ENCODE measurements at regions of chr1 and their contacts with region 1.

Region 1: DNA sequence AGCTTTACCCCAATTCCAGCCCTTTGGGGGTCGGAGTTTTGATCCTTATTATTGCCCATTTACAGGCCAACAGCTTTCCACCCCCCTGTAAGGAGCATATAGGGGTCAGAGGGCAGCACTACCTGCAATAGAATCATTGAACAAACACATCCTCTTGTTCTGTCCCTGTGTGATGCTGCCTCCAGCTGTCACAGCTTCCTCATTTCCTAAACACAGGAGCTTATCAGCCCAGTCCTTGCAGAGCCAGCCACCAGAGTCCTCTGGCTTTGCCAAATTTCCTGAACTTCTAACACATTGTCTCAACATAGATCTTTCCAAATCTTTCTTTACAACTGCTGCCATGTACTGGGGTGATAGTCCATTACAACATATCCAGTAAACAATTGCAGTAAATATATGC is 32.8 kb upstream of the PTBP2 start:
- DNase-seq: no peak
- ATAC-seq: no peak
- H3K4me3 ChIP-seq: no peak overlapping the region
- H3K27ac ChIP-seq: no peak overlapping the region
- H3K4me1 ChIP-seq: no peaks in the 10 kb centered on the region
- H3K27me3 ChIP-seq: no peaks in the 10 kb centered on the region
- CTCF ChIP-seq: no peak

Region 2: DNA sequence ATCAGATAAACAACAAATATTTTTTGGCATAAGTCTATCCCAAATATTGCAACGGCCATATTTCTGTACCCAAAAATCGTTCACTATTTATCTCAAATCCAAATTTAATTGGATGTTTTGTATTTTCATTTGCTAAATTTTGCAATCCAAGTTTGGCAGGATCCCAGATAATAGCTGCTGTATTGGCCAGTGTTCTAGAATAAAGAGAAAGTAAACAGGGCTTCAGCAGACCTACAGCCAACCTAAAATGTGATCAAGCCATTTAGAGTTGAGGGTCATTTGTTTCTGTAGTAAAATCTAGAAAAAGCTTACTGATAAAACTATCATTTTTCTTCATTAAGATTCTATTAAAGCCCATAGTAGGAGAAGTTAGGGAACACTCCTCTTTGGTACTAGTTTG is 473.8 kb before region 1 on chr1:
- CTCF ChIA-PET with region 1: no interaction called
- POLR2A ChIA-PET with region 1: interaction called, 10 read pairs
- intact Hi-C with region 1: no loop called
- DNase-seq: no peak
- ATAC-seq: no peak
- H3K4me3 ChIP-seq: no peak overlapping the region
- H3K27ac ChIP-seq: no peak overlapping the region
- H3K4me1 ChIP-seq: no peaks in the 10 kb centered on the region
- H3K27me3 ChIP-seq: peaks cover 61% of the 10 kb centered on the region
- CTCF ChIP-seq: no peak

Region 3: DNA sequence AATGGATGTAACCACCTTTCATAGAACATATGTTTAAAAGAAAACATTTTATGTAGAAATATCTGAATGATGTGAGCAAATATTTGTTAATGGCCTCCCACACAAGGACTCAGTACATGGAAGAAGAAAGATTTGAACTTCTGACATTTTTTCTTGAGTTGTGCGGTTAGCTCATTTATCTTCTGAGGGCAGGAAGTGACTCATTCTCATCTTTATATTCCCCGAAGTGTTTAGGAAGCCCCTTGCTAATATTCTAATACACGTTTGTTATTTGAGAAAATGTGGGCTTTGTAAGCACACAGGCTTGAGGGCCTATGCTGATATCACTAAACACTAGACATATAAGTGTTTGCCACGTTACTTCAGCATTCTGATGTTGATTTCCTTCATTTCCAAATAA is 359.6 kb before region 1 on chr1:
- CTCF ChIA-PET with region 1: no interaction called
- POLR2A ChIA-PET with region 1: interaction called, 15 read pairs
- intact Hi-C with region 1: no loop called
- DNase-seq: no peak
- ATAC-seq: no peak
- H3K4me3 ChIP-seq: no peak overlapping the region
- H3K27ac ChIP-seq: no peak overlapping the region
- H3K4me1 ChIP-seq: no peaks in the 10 kb centered on the region
- H3K27me3 ChIP-seq: no peaks in the 10 kb centered on the region
- CTCF ChIP-seq: no peak

Region 4: GRCh38 chr1:96634883-96635282 is 53.9 kb before region 1 on chr1:
- CTCF ChIA-PET with region 1: no interaction called
- POLR2A ChIA-PET with region 1: no interaction called
- intact Hi-C with region 1: no loop called
- DNase-seq: peak; percentile 34
- ATAC-seq: no peak
- H3K4me3 ChIP-seq: no peak overlapping the region
- H3K27ac ChIP-seq: no peak overlapping the region
- H3K4me1 ChIP-seq: no peaks in the 10 kb centered on the region
- H3K27me3 ChIP-seq: no peaks in the 10 kb centered on the region
- CTCF ChIP-seq: no peak

Region 5: DNA sequence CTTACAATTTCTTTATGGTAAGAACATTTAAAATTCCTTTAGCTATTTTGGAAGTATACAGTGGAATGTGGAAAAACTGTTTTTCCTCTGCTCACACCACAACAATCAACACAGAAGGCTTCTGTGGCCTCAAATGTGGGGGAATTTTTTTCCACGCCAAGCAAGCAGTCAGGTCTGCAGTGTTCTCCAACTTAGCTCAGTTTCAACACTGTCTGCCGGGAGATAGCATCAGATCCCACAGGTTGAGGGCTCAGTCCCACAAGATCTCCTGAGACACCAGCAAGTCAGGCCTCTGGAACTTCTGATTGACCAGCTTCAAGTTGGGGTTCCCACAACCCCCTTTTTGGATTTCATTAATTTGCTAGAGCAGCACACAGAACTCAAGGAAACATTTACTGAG is 83.1 kb after region 1 on chr1:
- CTCF ChIA-PET with region 1: no interaction called
- POLR2A ChIA-PET with region 1: no interaction called
- intact Hi-C with region 1: no loop called
- DNase-seq: no peak
- ATAC-seq: no peak
- H3K4me3 ChIP-seq: no peak overlapping the region
- H3K27ac ChIP-seq: no peak overlapping the region
- H3K4me1 ChIP-seq: no peaks in the 10 kb centered on the region
- H3K27me3 ChIP-seq: no peaks in the 10 kb centered on the region
- CTCF ChIP-seq: no peak